ENCODE measurements at regions of chr5 and their contacts with region 1.

Region 1: GRCh38 chr5:50667653-50668595 is 1.5 kb downstream of the PARP8 start:
- DNase-seq: peak; percentile 52
- ATAC-seq: peak; percentile 63
- H3K4me3 ChIP-seq: peak overlapping the region; percentile 100
- H3K27ac ChIP-seq: peak overlapping the region; percentile 90
- H3K4me1 ChIP-seq: 0 out of 2 replicates have a peak, but pooled peaks cover 2% of the 10 kb centered on the region
- H3K27me3 ChIP-seq: no peaks in the 10 kb centered on the region
- CTCF ChIP-seq: no peak
- POLR2A ChIP-seq: peak; percentile 51; the same call in 1 of the 2 replicates
- RAD21 ChIP-seq: no peak

Region 2: GRCh38 chr5:50595199-50595598 is 72.7 kb before region 1 on chr5:
- CTCF ChIA-PET with region 1: no interaction called
- POLR2A ChIA-PET with region 1: no interaction called
- dilution Hi-C with region 1: no loop called
- in situ Hi-C with region 1: no loop called
- intact Hi-C with region 1: no loop called
- DNase-seq: peak; percentile 90
- ATAC-seq: peak; percentile 60; the same call in 1 of the 2 replicates
- H3K4me3 ChIP-seq: no peak overlapping the region
- H3K27ac ChIP-seq: peak overlapping the region; percentile 5; the same call in 1 of the 2 replicates
- H3K4me1 ChIP-seq: peaks cover 3% of the 10 kb centered on the region; the same call in 1 of the 2 replicates
- H3K27me3 ChIP-seq: no peaks in the 10 kb centered on the region
- CTCF ChIP-seq: no peak
- POLR2A ChIP-seq: no peak
- RAD21 ChIP-seq: no peak

Region 3: GRCh38 chr5:50623666-50624065 is 44.3 kb before region 1 on chr5:
- CTCF ChIA-PET with region 1: no interaction called
- POLR2A ChIA-PET with region 1: no interaction called
- dilution Hi-C with region 1: no loop called
- in situ Hi-C with region 1: no loop called
- intact Hi-C with region 1: loop called (anchors 10 kb)
- DNase-seq: no peak
- ATAC-seq: no peak
- H3K4me3 ChIP-seq: no peak overlapping the region
- H3K27ac ChIP-seq: no peak overlapping the region
- H3K4me1 ChIP-seq: no peaks in the 10 kb centered on the region
- H3K27me3 ChIP-seq: no peaks in the 10 kb centered on the region
- CTCF ChIP-seq: no peak
- POLR2A ChIP-seq: no peak
- RAD21 ChIP-seq: no peak

Region 4: DNA sequence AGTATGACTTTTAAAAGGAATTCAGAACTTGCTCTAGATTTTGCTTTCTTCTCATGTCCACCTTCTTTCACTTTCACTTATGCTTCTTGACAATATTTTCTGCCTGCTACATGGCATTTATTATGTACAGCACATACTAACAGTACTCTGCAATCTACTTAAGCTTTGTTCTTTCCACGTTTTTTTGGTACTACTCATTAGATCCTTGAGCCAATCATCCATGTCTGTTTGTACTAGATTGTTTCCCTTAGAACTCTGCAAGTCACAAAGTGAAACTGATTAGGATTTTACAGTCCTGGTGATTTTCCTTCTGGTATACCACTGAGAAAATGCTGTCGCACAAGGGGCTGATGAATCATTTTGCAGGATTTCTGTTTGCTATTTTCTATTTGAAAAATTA is 76.9 kb after region 1 on chr5:
- CTCF ChIA-PET with region 1: no interaction called
- POLR2A ChIA-PET with region 1: no interaction called
- dilution Hi-C with region 1: no loop called
- in situ Hi-C with region 1: no loop called
- intact Hi-C with region 1: loop called (anchors 2 kb)
- DNase-seq: peak; percentile 74
- ATAC-seq: peak; percentile 94
- H3K4me3 ChIP-seq: peak overlapping the region; percentile 53
- H3K27ac ChIP-seq: no peak overlapping the region; the same call in 1 of the 2 replicates
- H3K4me1 ChIP-seq: 0 out of 2 replicates have a peak, but pooled peaks cover 2% of the 10 kb centered on the region
- H3K27me3 ChIP-seq: no peaks in the 10 kb centered on the region
- CTCF ChIP-seq: no peak
- POLR2A ChIP-seq: no peak
- RAD21 ChIP-seq: no peak